Mammary epithelial cell (primary cell): ENCODE measurements at regions of chr7 and their contacts with region 1.

Region 1: DNA sequence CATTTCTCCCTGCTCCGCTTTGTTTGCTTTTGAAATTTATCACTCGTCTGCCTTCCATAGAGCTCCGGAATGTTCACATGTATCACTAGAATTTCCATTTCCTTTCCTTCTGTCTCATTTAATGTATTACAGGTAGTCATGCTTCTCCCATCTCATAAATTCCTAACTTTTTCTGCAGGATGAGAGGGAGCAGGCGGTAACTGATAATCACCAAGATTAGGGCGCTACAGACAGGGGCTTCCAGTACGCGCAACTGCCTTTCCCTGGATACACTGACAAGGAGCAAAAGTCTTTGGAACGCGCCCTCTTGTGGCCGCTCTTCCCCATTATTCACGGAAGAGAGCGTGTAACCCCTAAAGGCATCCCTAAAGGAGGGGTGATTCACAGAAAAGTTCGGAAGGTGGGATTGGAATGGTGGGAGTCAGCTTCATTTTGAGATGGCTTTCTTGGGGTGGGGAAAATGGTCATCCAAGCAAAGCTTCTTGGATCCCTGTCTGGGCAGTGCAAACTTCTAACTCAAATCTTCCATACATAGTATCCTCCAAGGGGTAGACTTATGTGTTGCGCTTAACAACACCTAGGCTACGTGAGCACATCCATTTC is 6.5 kb downstream of the INHBA start:
- DNase-seq: peak; percentile 85
- H3K4me3 ChIP-seq: peak overlapping the region; percentile 70 to 92 (median 89)
- H3K27ac ChIP-seq: peak overlapping the region; percentile 87
- H3K4me1 ChIP-seq: peaks cover 29% of the 10 kb centered on the region
- H3K27me3 ChIP-seq: no peaks in the 10 kb centered on the region
- CTCF ChIP-seq: peak; percentile 47 to 73

Region 2: DNA sequence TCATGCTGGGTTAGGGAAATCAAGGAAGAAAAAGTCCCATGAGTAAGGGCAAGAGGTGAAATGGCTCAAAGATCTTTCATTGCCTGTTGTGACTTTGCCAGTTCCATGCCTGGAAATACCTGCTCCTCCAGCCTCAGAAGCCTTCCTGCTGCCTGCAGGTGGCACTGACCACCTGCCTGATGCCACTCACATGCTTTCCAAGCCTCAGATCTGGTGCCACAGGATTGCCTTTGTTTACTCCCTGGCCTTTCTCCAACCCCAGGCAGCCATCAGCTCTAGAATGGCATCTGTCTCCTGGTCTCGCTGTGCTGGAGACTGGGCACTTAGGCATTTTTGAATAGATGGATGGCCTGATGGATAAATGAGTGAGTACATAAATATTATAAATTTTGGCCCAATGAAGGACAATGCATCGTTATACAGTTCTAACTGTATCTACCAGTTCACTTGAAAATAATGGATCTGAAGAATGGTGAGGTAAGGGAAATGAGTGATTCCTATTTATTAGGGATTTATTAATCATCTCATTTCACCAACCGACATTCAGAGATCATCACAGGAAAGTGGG is 650.8 kb before region 1 on chr7:
- CTCF ChIA-PET with region 1: no interaction called
- dilution Hi-C with region 1: no loop called
- in situ Hi-C with region 1: loop called (anchors 5 to 10 kb)
- intact Hi-C with region 1: loop called (anchors 1 kb)
- DNase-seq: peak; percentile 70
- H3K4me3 ChIP-seq: no peak overlapping the region
- H3K27ac ChIP-seq: no peak overlapping the region
- H3K4me1 ChIP-seq: peaks cover 16% of the 10 kb centered on the region
- H3K27me3 ChIP-seq: no peaks in the 10 kb centered on the region
- CTCF ChIP-seq: peak; percentile 71 to 88

Region 3: DNA sequence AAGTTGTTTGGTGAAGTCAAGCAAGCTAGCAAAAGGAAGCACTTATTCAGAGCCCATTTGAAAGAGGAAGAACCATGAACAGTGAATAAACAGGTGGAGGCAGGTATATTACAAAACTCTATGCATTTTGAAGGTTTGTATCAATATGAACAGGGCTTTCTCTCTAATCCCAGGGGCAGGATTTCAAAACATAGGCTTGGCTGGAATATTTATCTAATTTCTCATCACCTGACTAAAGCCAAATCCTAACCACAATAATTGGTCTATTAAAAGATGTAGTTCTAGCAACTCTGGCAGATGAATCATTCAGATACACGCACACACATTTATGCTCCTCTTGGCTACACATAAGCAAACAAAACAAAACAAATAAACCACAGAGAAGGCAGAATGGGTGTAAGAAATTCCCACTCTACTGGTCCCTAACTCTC is 547.9 kb before region 1 on chr7:
- CTCF ChIA-PET with region 1: no interaction called
- dilution Hi-C with region 1: no loop called
- in situ Hi-C with region 1: no loop called
- intact Hi-C with region 1: loop called (anchors 1 kb)
- DNase-seq: peak; percentile 98
- H3K4me3 ChIP-seq: no peak overlapping the region
- H3K27ac ChIP-seq: peak overlapping the region; percentile 99
- H3K4me1 ChIP-seq: peaks cover 46% of the 10 kb centered on the region
- H3K27me3 ChIP-seq: no peaks in the 10 kb centered on the region
- CTCF ChIP-seq: no peak

Region 4: DNA sequence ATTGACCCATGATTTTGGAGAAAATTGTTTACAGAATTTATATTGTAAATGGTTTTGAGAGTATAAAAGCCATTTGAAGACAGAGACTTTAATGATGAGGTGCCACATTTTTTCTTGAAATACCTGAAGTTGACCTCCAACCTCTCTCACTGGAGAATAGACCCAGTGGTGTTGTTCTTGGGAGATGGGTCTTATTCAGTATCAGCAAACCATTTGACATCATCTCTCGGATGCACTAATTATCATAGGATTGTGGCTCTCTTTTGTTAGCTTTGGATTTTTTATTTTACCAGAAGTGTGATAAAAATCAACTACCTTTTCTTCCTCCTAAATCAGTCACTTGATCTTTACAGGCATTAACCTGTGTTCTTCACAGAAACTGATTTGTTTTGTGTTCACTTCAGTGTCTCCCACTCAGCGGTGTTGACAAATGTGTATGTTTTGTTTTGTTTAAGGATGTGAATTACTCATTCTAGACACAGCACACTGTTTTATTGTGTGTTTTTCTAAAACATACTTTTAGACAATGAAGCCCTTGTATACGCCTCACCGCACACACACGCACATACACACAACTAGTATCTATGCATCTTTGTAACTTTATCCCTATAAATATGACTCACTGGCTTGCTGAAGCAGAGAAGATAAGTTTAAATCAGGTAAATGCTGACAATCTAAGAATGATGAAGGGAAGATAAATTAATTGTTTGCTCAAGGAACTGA is 449.1 kb before region 1 on chr7:
- CTCF ChIA-PET with region 1: no interaction called
- dilution Hi-C with region 1: no loop called
- in situ Hi-C with region 1: no loop called
- intact Hi-C with region 1: loop called (anchors 5 kb)
- DNase-seq: peak; percentile 97
- H3K4me3 ChIP-seq: no peak overlapping the region
- H3K27ac ChIP-seq: peak overlapping the region; percentile 93
- H3K4me1 ChIP-seq: peaks cover 25% of the 10 kb centered on the region
- H3K27me3 ChIP-seq: no peaks in the 10 kb centered on the region
- CTCF ChIP-seq: no peak

Region 5: DNA sequence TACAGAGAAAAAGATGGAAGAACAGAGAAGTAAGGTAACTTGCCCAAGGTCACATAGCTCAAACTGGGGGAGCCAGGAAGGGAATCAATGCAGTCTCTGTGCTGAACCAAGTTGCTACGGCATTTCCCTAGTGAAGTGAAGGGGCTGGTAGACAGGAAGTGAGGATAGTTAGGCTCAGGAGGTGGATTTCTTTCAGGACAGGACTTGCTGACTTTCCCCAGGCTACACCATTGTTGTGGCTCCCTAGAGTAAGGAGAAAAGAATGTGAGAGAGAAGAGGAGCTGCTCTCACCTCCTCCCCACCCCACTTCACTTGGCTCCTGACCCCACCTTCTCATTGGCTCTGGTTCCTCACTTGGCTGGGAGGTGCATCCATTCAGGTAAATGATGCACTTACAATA is 310.4 kb before region 1 on chr7:
- CTCF ChIA-PET with region 1: no interaction called
- dilution Hi-C with region 1: no loop called
- in situ Hi-C with region 1: no loop called
- intact Hi-C with region 1: loop called (anchors 2 kb)
- DNase-seq: peak; percentile 94
- H3K4me3 ChIP-seq: no peak overlapping the region
- H3K27ac ChIP-seq: peak overlapping the region; percentile 87
- H3K4me1 ChIP-seq: peaks cover 27% of the 10 kb centered on the region
- H3K27me3 ChIP-seq: no peaks in the 10 kb centered on the region
- CTCF ChIP-seq: no peak

Region 6: DNA sequence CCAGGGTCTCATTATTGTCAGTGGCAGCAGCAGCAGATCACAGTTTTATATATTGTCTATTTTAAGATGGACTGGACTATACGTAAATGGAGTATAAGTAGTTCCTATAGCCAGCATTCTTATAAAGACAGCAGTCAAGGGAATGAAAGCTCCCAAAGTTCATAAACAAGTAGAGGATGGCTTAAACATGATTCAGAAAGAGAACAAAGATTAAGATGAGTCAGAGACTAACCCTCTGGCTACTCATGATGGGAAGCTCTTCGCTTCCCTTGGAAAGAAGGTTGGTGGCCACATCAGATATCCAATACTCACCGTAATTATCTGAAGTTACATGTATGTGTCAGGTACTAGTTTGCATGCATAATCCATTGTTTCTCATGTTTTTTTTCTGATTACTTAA is 270.5 kb before region 1 on chr7:
- CTCF ChIA-PET with region 1: no interaction called
- dilution Hi-C with region 1: no loop called
- in situ Hi-C with region 1: no loop called
- intact Hi-C with region 1: no loop called
- DNase-seq: peak; percentile 84
- H3K4me3 ChIP-seq: no peak overlapping the region
- H3K27ac ChIP-seq: peak overlapping the region; percentile 52
- H3K4me1 ChIP-seq: peaks cover 11% of the 10 kb centered on the region
- H3K27me3 ChIP-seq: no peaks in the 10 kb centered on the region
- CTCF ChIP-seq: no peak